Activated B cell treated with CpG ODN at 0.5 μM for 24 hours (primary cell): ENCODE measurements at regions of chr6 and their contacts with region 1.

Region 1: GRCh38 chr6:130843575-130844320 is 16.5 kb downstream of the SMLR1 start:
- DNase-seq: no peak
- ATAC-seq: peak; percentile 73
- H3K4me3 Mint-ChIP-seq: no peak overlapping the region
- H3K27ac Mint-ChIP-seq: no peak overlapping the region
- H3K4me1 Mint-ChIP-seq: peaks cover 19% of the 10 kb centered on the region
- H3K27me3 Mint-ChIP-seq: no peaks in the 10 kb centered on the region
- CTCF ChIP-seq: peak; percentile 31

Region 2: GRCh38 chr6:130037207-130037811 is 806.4 kb before region 1 on chr6:
- CTCF ChIA-PET with region 1: no interaction called
- POLR2A ChIA-PET with region 1: no interaction called
- intact Hi-C with region 1: loop called (anchors 1 kb)
- DNase-seq: no peak
- ATAC-seq: peak; percentile 49
- H3K4me3 Mint-ChIP-seq: no peak overlapping the region
- H3K27ac Mint-ChIP-seq: no peak overlapping the region
- H3K4me1 Mint-ChIP-seq: peaks cover 68% of the 10 kb centered on the region
- H3K27me3 Mint-ChIP-seq: no peaks in the 10 kb centered on the region
- CTCF ChIP-seq: no peak

Region 3: GRCh38 chr6:130293800-130294199 is 549.9 kb before region 1 on chr6:
- CTCF ChIA-PET with region 1: interaction called, 4 read pairs
- POLR2A ChIA-PET with region 1: no interaction called
- intact Hi-C with region 1: loop called (anchors 1 kb)
- DNase-seq: no peak
- ATAC-seq: peak; percentile 61
- H3K4me3 Mint-ChIP-seq: no peak overlapping the region
- H3K27ac Mint-ChIP-seq: no peak overlapping the region
- H3K4me1 Mint-ChIP-seq: peaks cover 5% of the 10 kb centered on the region
- H3K27me3 Mint-ChIP-seq: no peaks in the 10 kb centered on the region
- CTCF ChIP-seq: no peak

Region 4: DNA sequence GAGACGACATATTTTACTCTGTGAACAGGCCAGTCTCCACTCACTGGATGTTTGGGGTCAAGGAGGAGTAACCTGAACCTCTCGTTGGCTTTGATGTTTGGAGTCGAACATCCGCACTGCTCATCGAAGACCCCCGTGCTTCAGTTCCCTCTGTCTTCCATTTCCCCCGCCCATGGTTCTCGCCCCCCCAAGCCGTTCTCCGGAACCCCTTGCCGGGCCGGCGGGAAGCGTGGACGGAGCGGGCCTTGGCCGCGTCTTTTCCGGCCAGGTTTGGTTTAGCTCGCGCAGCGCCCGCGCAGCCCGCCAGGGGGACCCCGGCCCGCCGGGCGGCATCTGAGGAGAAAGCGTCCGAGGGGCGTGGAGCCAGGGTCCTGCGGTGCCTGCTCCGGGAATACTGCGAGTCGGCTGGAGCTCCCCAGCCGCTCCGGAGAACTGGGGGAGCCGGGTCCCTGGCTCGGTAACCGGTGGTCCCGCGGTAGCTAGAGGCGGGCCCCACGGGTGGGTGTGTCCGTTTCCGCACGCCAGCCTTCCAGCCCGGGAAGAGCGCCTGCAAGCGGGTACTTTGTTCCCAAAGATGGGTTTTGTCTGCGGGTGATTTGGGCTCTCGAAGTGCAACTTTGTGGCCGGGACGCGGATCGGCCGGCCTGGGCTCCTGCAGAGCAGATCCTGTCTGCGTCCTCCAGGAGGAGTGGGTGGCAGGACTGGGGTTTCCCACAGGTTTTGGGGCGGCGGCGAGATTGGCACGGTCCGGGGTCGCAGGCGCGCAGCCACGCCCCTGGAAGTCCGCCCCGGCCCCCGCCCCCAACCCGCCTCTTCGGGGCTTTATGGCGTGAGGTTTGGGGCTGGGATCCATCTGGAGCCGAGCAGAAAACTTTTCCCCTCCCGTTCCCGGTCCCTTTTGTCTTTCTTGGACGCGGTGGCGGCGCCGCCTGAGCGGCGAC is 478.3 kb before region 1 on chr6 and contains the start of gene TMEM200A:
- CTCF ChIA-PET with region 1: interaction called, 3 read pairs
- POLR2A ChIA-PET with region 1: interaction called, 3 read pairs
- intact Hi-C with region 1: loop called (anchors 1 kb)
- DNase-seq: peak; percentile 50
- ATAC-seq: peak; percentile 72
- H3K4me3 Mint-ChIP-seq: peak within 1 kb of the TSS; percentile 78
- H3K27ac Mint-ChIP-seq: no peak within 1 kb of the TSS
- H3K4me1 Mint-ChIP-seq: peaks cover 16% of the 10 kb centered on the region
- H3K27me3 Mint-ChIP-seq: peaks cover 36% of the 10 kb centered on the region
- CTCF ChIP-seq: no peak
- total RNA-seq, gene TMEM200A: 0.69 and 1.1 TPM in 2 replicates

Region 5: DNA sequence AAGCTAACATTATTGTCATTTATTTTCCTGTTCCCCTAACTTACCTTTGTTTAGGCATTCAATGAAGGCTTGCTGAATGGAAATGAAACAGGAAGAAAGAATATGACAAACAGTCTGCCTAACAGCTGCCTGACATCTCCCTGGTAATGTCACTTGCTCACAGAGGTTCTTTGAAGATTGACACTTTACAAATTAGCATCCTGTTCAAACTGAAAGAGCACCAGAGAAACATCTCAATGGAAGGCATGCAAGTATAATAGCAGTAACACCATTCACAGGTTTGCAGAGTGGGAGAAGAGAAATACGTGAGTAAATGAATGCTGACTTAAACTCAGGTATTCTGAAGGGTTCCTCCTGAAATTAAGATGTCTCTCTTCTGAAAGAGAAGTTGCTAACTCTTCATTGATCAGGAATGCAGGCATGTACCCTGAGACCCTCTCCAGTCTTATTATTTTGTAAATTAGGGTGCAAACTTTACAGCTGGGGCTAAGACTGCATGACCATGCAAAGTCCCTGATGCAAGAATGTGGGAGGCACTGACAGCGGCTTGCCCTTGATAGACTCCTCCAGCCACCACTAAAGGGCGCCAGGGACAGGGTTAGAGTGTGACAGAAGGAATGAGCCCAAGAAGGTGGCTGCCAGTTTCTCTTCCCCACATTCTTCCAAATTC is 17.8 kb before region 1 on chr6:
- CTCF ChIA-PET with region 1: no interaction called
- POLR2A ChIA-PET with region 1: no interaction called
- intact Hi-C with region 1: no loop called
- DNase-seq: no peak
- ATAC-seq: no peak
- H3K4me3 Mint-ChIP-seq: no peak overlapping the region
- H3K27ac Mint-ChIP-seq: no peak overlapping the region
- H3K4me1 Mint-ChIP-seq: no peaks in the 10 kb centered on the region
- H3K27me3 Mint-ChIP-seq: peaks cover 2% of the 10 kb centered on the region
- CTCF ChIP-seq: no peak

Region 6: GRCh38 chr6:131013495-131013894 is 169.7 kb after region 1 on chr6:
- CTCF ChIA-PET with region 1: no interaction called
- POLR2A ChIA-PET with region 1: no interaction called
- intact Hi-C with region 1: no loop called
- DNase-seq: no peak
- ATAC-seq: no peak
- H3K4me3 Mint-ChIP-seq: no peak overlapping the region
- H3K27ac Mint-ChIP-seq: no peak overlapping the region
- H3K4me1 Mint-ChIP-seq: peaks cover 18% of the 10 kb centered on the region
- H3K27me3 Mint-ChIP-seq: no peaks in the 10 kb centered on the region
- CTCF ChIP-seq: no peak